Esophagus squamous epithelium (tissue), 5 donors: ENCODE measurements at regions of chr18 and their contacts with region 1.

Region 1: GRCh38 chr18:13629841-13630715 is 96.3 kb downstream of the FAM210A start:
- DNase-seq: no peak
- H3K4me3 ChIP-seq: no peak overlapping the region
- H3K27ac ChIP-seq: peak overlapping the region in 3 of 4 donors; percentile 22 to 44 (median 44)
- H3K4me1 ChIP-seq: peaks cover 0 to 6% (median 3%) of the 10 kb centered on the region in 3 donors
- H3K27me3 ChIP-seq: no peaks in the 10 kb centered on the region
- CTCF ChIP-seq: peak; percentile 59 to 72 (median 64)
- POLR2A ChIP-seq: no peak

Region 2: DNA sequence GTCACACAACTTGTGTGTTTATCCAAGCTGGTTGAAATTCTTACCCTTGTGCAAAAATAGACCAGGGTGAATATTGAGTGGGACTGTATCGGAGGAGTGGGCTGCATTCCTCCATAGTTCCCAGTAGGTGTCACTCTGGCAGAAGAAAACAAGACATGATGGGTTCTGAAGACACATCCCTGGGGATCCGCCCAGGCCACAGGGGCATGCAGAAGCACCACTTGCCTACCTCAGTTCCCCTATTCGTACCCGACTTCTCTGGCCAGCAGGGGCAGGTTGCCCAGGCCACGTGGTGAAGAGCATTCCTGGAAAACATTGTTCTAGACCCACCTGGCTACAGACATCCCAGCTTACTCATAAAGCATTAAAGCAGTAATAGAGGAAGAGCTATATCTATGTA is 72.0 kb before region 1 on chr18:
- intact Hi-C with region 1: loop called (anchors 10 kb)
- DNase-seq: no peak
- H3K4me3 ChIP-seq: no peak overlapping the region
- H3K27ac ChIP-seq: no peak overlapping the region
- H3K4me1 ChIP-seq: peaks cover 0 to 16% (median 0%) of the 10 kb centered on the region in 3 donors
- H3K27me3 ChIP-seq: no peaks in the 10 kb centered on the region
- CTCF ChIP-seq: peak in 5 of 6 experiments; percentile 26 to 51 (median 51)
- POLR2A ChIP-seq: no peak